Activated T-helper 1 cell treated with anti-CD3 and anti-CD28 coated beads, Interleukin-12 subunit alpha, Interleukin-12 subunit beta, Interleukin-2, Interleukin-4 antibody, amounts not matched to agents 30 ng/mL and 10 ng/mL and 1 ng/mL, durations not matched to agents 14 hours and 24 hours and 36 hours (primary cell): ENCODE measurements at regions of chr22 and their contacts with region 1.

Region 1: GRCh38 chr22:23849009-23850006 is 8.4 kb upstream of the SLC2A11 start:
- DNase-seq: peak; percentile 82
- H3K4me3 Mint-ChIP-seq: no peak overlapping the region
- H3K27ac Mint-ChIP-seq: no peak overlapping the region
- H3K4me1 Mint-ChIP-seq: no peaks in the 10 kb centered on the region
- H3K27me3 Mint-ChIP-seq: peaks cover 8% of the 10 kb centered on the region

Region 2: DNA sequence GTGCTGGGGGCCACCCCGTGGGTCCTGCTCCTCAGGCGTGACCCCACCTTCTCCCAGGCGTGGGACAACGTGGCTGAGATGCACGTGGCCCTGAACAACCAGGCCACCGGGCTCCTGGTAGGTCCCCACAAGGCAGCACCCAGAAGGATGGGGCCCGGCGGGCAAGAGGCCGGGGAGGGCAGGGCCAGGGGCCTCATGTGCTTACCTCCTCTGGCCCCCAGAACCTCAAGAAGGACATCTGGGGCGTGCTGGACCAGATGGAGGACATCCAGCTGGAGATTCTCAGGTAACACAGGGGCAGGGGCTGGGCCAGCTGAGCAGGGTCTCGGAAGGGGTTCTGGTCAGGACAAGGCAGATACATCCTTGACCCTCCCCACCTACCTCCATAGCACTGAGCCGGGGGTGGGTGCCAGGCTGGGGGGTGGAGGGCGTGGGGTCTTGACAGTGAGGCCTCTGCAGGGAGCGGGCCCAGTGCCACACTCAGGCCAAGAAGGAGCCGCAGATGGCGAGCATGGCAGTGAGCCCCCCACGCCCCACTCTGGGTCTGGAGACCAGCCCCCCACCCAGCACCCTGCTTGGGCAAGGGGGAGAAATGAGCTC is 455.5 kb before region 1 on chr22:
- intact Hi-C with region 1: loop called (anchors 5 kb)
- DNase-seq: no peak
- H3K4me3 Mint-ChIP-seq: no peak overlapping the region
- H3K27ac Mint-ChIP-seq: no peak overlapping the region
- H3K4me1 Mint-ChIP-seq: no peaks in the 10 kb centered on the region
- H3K27me3 Mint-ChIP-seq: no peaks in the 10 kb centered on the region

Region 3: GRCh38 chr22:23800297-23801237 is 48.7 kb before region 1 on chr22:
- intact Hi-C with region 1: no loop called
- DNase-seq: no peak
- H3K4me3 Mint-ChIP-seq: no peak overlapping the region
- H3K27ac Mint-ChIP-seq: no peak overlapping the region
- H3K4me1 Mint-ChIP-seq: no peaks in the 10 kb centered on the region
- H3K27me3 Mint-ChIP-seq: no peaks in the 10 kb centered on the region